ENCODE measurements at regions of chr1 and their contacts with region 1.

Region 1: GRCh38 chr1:236795035-236795756 is at the start of gene MTR:
- DNase-seq: peak; percentile 84 to 97 (median 96)
- ATAC-seq: peak; percentile 95
- H3K4me3 ChIP-seq: peak within 1 kb of the TSS; percentile 61
- H3K4me3 Mint-ChIP-seq: peak within 1 kb of the TSS; percentile 87 to 99 (median 95)
- H3K27ac ChIP-seq: peak within 1 kb of the TSS; percentile 98
- H3K27ac Mint-ChIP-seq: peak within 1 kb of the TSS; percentile 93 to 100 (median 97)
- H3K4me1 ChIP-seq: peaks cover 13 to 14% of the 10 kb centered on the region in 2 donors
- H3K4me1 Mint-ChIP-seq: peaks cover 14 to 49% (median 41%) of the 10 kb centered on the region in 7 donors
- H3K27me3 ChIP-seq: no peaks in the 10 kb centered on the region
- H3K27me3 Mint-ChIP-seq: peaks cover 0 to 13% (median 0%) of the 10 kb centered on the region in 5 donors
- total RNA-seq, gene MTR: 42.9 to 78.8 (median 49.4) TPM

Region 2: GRCh38 chr1:235128456-235129328 is 1666.5 kb before region 1 on chr1 and contains the start of gene TOMM20:
- CTCF ChIA-PET with region 1: no interaction called
- POLR2A ChIA-PET with region 1: no interaction called
- intact Hi-C with region 1: loop called in 1 of 2 experiments (anchors 10 kb)
- DNase-seq: peak; percentile 91 to 97 (median 95)
- ATAC-seq: peak; percentile 97
- H3K4me3 ChIP-seq: peak within 1 kb of the TSS; percentile 98
- H3K4me3 Mint-ChIP-seq: peak within 1 kb of the TSS; percentile 88 to 99 (median 96)
- H3K27ac ChIP-seq: peak within 1 kb of the TSS; percentile 94
- H3K27ac Mint-ChIP-seq: peak within 1 kb of the TSS; percentile 93 to 99 (median 98)
- H3K4me1 ChIP-seq: peaks cover 22 to 24% of the 10 kb centered on the region in 2 donors
- H3K4me1 Mint-ChIP-seq: peaks cover 17 to 55% (median 42%) of the 10 kb centered on the region in 7 donors
- H3K27me3 ChIP-seq: no peaks in the 10 kb centered on the region
- H3K27me3 Mint-ChIP-seq: no peaks in the 10 kb centered on the region
- total RNA-seq, gene TOMM20: 88.0 to 124 (median 100) TPM

Region 3: DNA sequence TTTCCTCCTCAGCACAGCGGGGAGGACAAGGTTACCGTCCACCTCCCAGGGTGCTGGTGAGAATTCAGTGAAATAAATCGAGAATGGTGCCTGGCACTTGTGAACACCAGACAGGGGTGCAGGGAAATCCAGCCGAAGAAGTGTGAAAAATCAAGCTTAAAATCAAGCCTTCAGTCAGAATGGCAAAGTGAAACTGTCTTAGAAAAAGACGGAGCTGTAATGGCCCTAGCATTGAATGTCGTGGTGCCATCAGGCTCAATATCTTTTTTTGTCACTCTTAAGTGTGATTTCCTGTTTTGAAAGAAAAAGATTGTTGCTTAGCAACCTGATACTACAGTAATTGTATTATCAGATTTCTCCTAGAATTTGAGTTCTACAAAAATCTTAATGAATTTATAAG is 379.0 kb before region 1 on chr1:
- CTCF ChIA-PET with region 1: no interaction called
- POLR2A ChIA-PET with region 1: no interaction called
- intact Hi-C with region 1: loop called in 1 of 2 experiments (anchors 5 kb)
- DNase-seq: peak in 8 of 9 donors; percentile 13 to 75 (median 55)
- ATAC-seq: peak; percentile 94
- H3K4me3 ChIP-seq: peak overlapping the region; percentile 41
- H3K4me3 Mint-ChIP-seq: peak overlapping the region; percentile 13 to 77 (median 62)
- H3K27ac ChIP-seq: peak overlapping the region; percentile 52
- H3K27ac Mint-ChIP-seq: peak overlapping the region; percentile 73 to 95 (median 81)
- H3K4me1 ChIP-seq: peaks cover 11 to 26% of the 10 kb centered on the region in 2 donors
- H3K4me1 Mint-ChIP-seq: peaks cover 8 to 17% (median 10%) of the 10 kb centered on the region in 7 donors
- H3K27me3 ChIP-seq: no peaks in the 10 kb centered on the region
- H3K27me3 Mint-ChIP-seq: no peaks in the 10 kb centered on the region

Region 4: GRCh38 chr1:236523701-236524141 is 271.5 kb before region 1 on chr1 and contains the start of gene LGALS8:
- CTCF ChIA-PET with region 1: no interaction called
- POLR2A ChIA-PET with region 1: interaction called, 3 read pairs
- intact Hi-C with region 1: loop called (anchors 1 to 2 kb)
- DNase-seq: peak; percentile 68 to 87 (median 83)
- ATAC-seq: peak; percentile 90
- H3K4me3 ChIP-seq: peak within 1 kb of the TSS; percentile 70
- H3K4me3 Mint-ChIP-seq: peak within 1 kb of the TSS; percentile 93 to 100 (median 99)
- H3K27ac ChIP-seq: peak within 1 kb of the TSS; percentile 87
- H3K27ac Mint-ChIP-seq: peak within 1 kb of the TSS; percentile 97 to 99 (median 98)
- H3K4me1 ChIP-seq: peaks cover 4 to 5% of the 10 kb centered on the region in 2 donors
- H3K4me1 Mint-ChIP-seq: peaks cover 8 to 38% (median 35%) of the 10 kb centered on the region in 7 donors
- H3K27me3 ChIP-seq: no peaks in the 10 kb centered on the region
- H3K27me3 Mint-ChIP-seq: peaks cover 0 to 3% (median 0%) of the 10 kb centered on the region in 5 donors
- total RNA-seq, gene LGALS8: 114 to 143 (median 134) TPM

Region 5: GRCh38 chr1:236543065-236543669 is 252.0 kb before region 1 on chr1:
- CTCF ChIA-PET with region 1: no interaction called
- POLR2A ChIA-PET with region 1: no interaction called
- intact Hi-C with region 1: no loop called
- DNase-seq: no peak
- ATAC-seq: no peak
- H3K4me3 ChIP-seq: no peak overlapping the region
- H3K4me3 Mint-ChIP-seq: no peak overlapping the region
- H3K27ac ChIP-seq: no peak overlapping the region
- H3K27ac Mint-ChIP-seq: peak overlapping the region in 4 of 9 donors; percentile 8 to 61 (median 48)
- H3K4me1 ChIP-seq: peaks cover 9 to 13% of the 10 kb centered on the region in 2 donors
- H3K4me1 Mint-ChIP-seq: peaks cover 9 to 25% (median 20%) of the 10 kb centered on the region in 7 donors
- H3K27me3 ChIP-seq: no peaks in the 10 kb centered on the region
- H3K27me3 Mint-ChIP-seq: no peaks in the 10 kb centered on the region

Region 6: GRCh38 chr1:236685917-236686814 is 109.0 kb before region 1 on chr1 and contains the start of gene ACTN2:
- CTCF ChIA-PET with region 1: no interaction called
- POLR2A ChIA-PET with region 1: no interaction called
- intact Hi-C with region 1: loop called in 1 of 2 experiments (anchors 5 kb)
- DNase-seq: peak; percentile 4 to 55 (median 24)
- ATAC-seq: peak; percentile 88
- H3K4me3 ChIP-seq: peak within 1 kb of the TSS; percentile 54
- H3K4me3 Mint-ChIP-seq: peak within 1 kb of the TSS; percentile 75 to 96 (median 80)
- H3K27ac ChIP-seq: no peak within 1 kb of the TSS
- H3K27ac Mint-ChIP-seq: peak within 1 kb of the TSS in 5 of 9 donors; percentile 16 to 90 (median 52)
- H3K4me1 ChIP-seq: peaks cover 12 to 13% of the 10 kb centered on the region in 2 donors
- H3K4me1 Mint-ChIP-seq: peaks cover 9 to 32% (median 25%) of the 10 kb centered on the region in 7 donors
- H3K27me3 ChIP-seq: peaks cover 8 to 14% of the 10 kb centered on the region in 2 donors
- H3K27me3 Mint-ChIP-seq: peaks cover 34 to 60% (median 50%) of the 10 kb centered on the region in 5 donors
- total RNA-seq, gene ACTN2: not detected

Region 7: DNA sequence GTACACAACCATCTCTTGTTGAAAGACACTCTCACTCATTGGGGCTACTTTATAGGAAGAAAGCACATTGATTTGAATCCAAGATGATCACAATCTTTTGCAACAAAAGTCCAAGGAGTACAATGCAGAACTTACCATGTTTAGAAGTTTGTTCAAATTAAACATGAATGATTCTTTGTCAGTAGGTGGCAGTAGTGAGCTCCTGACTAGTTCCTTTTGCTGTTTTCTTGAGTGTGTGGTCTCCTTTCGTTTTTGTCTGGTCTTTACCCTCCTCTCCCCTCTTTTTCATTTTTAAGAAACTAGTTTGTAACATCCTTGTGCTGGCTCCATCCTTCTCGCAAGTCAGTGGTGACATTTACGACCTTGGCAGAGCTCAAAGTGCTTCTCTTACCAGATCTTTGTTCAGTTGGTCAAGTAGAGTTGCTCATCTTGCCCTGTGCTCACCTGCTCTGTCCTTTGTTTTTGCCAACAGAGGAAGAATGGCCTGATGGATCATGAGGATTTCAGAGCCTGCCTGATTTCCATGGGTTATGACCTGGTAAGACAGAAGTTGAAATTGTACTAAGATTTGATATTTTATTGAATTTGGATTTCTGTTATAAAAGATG is 35.8 kb before region 1 on chr1:
- CTCF ChIA-PET with region 1: no interaction called
- POLR2A ChIA-PET with region 1: no interaction called
- intact Hi-C with region 1: loop called (anchors 1 kb)
- DNase-seq: peak in 6 of 9 donors; percentile 13 to 57 (median 42)
- ATAC-seq: peak; percentile 59
- H3K4me3 ChIP-seq: no peak overlapping the region
- H3K4me3 Mint-ChIP-seq: peak overlapping the region in 5 of 10 donors; percentile 5 to 66 (median 19)
- H3K27ac ChIP-seq: no peak overlapping the region
- H3K27ac Mint-ChIP-seq: peak overlapping the region in 1 of 9 donors; percentile 78
- H3K4me1 ChIP-seq: no peaks in the 10 kb centered on the region
- H3K4me1 Mint-ChIP-seq: peaks cover 0 to 5% (median 4%) of the 10 kb centered on the region in 7 donors
- H3K27me3 ChIP-seq: no peaks in the 10 kb centered on the region
- H3K27me3 Mint-ChIP-seq: peaks cover 0 to 10% (median 0%) of the 10 kb centered on the region in 5 donors

Region 8: GRCh38 chr1:236868625-236869467 is 73.7 kb after region 1 on chr1:
- CTCF ChIA-PET with region 1: interaction called, 4 read pairs
- POLR2A ChIA-PET with region 1: no interaction called
- intact Hi-C with region 1: loop called in 1 of 2 experiments (anchors 2 kb)
- DNase-seq: peak in 8 of 9 donors; percentile 14 to 58 (median 46)
- ATAC-seq: peak; percentile 73
- H3K4me3 ChIP-seq: no peak overlapping the region
- H3K4me3 Mint-ChIP-seq: no peak overlapping the region
- H3K27ac ChIP-seq: no peak overlapping the region
- H3K27ac Mint-ChIP-seq: peak overlapping the region in 1 of 9 donors; percentile 41
- H3K4me1 ChIP-seq: no peaks in the 10 kb centered on the region
- H3K4me1 Mint-ChIP-seq: peaks cover 0 to 16% (median 0%) of the 10 kb centered on the region in 7 donors
- H3K27me3 ChIP-seq: no peaks in the 10 kb centered on the region
- H3K27me3 Mint-ChIP-seq: no peaks in the 10 kb centered on the region

Measured in naive thymus-derived CD4-positive, alpha-beta T cell (primary cell).